ENCODE measurements at regions of chr18 and their contacts with region 1.

Region 1: GRCh38 chr18:7789856-7790552 is 222.9 kb downstream of the PTPRM start:
- DNase-seq: peak; percentile 55
- ATAC-seq: peak; percentile 81
- H3K4me3 ChIP-seq: no peak overlapping the region
- H3K27ac ChIP-seq: no peak overlapping the region
- H3K4me1 ChIP-seq: no peaks in the 10 kb centered on the region
- H3K27me3 ChIP-seq: no peaks in the 10 kb centered on the region
- CTCF ChIP-seq: peak; percentile 61
- POLR2A ChIP-seq: no peak
- RAD21 ChIP-seq: peak; percentile 79

Region 2: GRCh38 chr18:7221424-7222155 is 568.4 kb before region 1 on chr18:
- CTCF ChIA-PET with region 1: no interaction called
- POLR2A ChIA-PET with region 1: no interaction called
- dilution Hi-C with region 1: no loop called
- in situ Hi-C with region 1: no loop called
- intact Hi-C with region 1: loop called (anchors 5 kb)
- DNase-seq: peak; percentile 69
- ATAC-seq: peak; percentile 97
- H3K4me3 ChIP-seq: no peak overlapping the region
- H3K27ac ChIP-seq: no peak overlapping the region
- H3K4me1 ChIP-seq: no peaks in the 10 kb centered on the region
- H3K27me3 ChIP-seq: peaks cover 3% of the 10 kb centered on the region
- CTCF ChIP-seq: peak; percentile 79
- POLR2A ChIP-seq: no peak
- RAD21 ChIP-seq: peak; percentile 90

Region 3: DNA sequence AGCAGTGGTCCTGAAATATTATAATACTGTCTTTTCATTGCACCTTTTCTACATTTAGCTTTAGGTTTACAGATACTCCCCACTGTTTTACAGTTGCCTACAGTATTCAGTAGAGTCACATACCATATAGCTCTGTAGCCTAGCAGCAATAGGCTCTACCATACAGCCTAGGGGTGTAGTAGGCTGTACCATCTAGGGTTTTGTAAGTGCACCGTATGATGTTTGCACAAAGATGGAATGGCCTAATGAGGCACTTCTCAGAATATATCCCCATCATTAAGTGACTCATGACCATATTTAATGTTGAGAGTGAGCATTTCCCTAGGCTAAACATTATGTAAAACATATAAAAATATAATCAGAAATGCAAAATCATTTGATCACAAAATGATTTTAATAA is 307.9 kb after region 1 on chr18:
- CTCF ChIA-PET with region 1: no interaction called
- POLR2A ChIA-PET with region 1: no interaction called
- dilution Hi-C with region 1: no loop called
- in situ Hi-C with region 1: no loop called
- intact Hi-C with region 1: no loop called
- DNase-seq: no peak
- ATAC-seq: no peak
- H3K4me3 ChIP-seq: no peak overlapping the region
- H3K27ac ChIP-seq: no peak overlapping the region
- H3K4me1 ChIP-seq: no peaks in the 10 kb centered on the region
- H3K27me3 ChIP-seq: no peaks in the 10 kb centered on the region
- CTCF ChIP-seq: no peak
- POLR2A ChIP-seq: no peak
- RAD21 ChIP-seq: no peak

Region 4: DNA sequence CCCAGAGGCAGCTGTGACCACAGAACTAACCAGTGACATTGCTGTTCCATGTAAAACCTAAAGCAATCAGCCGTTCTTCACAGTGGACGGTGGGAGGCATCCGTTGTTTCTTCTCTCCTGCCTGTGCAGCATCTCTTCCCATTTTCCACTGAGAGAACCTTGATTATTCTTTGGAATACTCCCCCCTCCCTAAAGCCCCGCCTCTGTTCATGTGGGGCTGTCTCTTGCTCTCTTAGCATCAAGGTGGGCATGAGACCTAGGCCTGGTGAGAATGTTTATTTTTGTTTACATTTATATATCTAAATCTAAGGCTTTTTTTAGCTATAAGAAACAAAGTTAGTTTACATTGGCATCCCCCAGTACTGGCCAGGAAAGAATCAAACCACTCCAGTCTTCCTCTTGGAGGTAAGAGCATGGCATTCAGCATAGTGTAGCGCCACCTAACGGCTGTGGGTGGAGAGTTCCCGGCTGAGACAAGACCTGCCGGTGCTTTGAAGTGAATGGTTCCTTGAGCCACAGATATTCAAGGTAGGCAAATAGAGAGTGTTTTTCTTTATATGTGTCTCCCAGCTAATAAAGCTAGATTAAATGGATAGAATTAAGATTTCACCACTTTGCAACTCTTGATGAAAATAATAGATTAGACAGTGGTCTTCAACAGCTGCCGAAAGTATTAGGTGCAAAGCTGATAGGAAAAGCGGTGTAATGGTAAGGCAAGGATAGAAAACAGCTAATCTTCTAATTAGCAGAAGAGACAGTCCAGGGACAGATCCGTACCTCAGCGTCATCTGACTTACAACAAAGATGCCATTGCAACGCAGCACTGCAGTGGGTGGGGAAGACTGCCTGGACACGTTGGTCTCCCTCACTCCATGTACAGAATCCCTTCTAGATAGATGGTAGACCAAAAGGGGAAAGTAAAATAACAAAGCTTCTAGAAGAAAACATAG is 599.7 kb after region 1 on chr18:
- CTCF ChIA-PET with region 1: interaction called, 3 read pairs
- POLR2A ChIA-PET with region 1: no interaction called
- dilution Hi-C with region 1: no loop called
- in situ Hi-C with region 1: loop called (anchors 25 kb)
- intact Hi-C with region 1: loop called (anchors 5 kb)
- DNase-seq: peak; percentile 78
- ATAC-seq: peak; percentile 60; the same call in 1 of the 2 replicates
- H3K4me3 ChIP-seq: no peak overlapping the region
- H3K27ac ChIP-seq: no peak overlapping the region
- H3K4me1 ChIP-seq: peaks cover 2% of the 10 kb centered on the region; the same call in 1 of the 2 replicates
- H3K27me3 ChIP-seq: no peaks in the 10 kb centered on the region
- CTCF ChIP-seq: peak; percentile 78
- POLR2A ChIP-seq: no peak
- RAD21 ChIP-seq: peak; percentile 87

Region 5: DNA sequence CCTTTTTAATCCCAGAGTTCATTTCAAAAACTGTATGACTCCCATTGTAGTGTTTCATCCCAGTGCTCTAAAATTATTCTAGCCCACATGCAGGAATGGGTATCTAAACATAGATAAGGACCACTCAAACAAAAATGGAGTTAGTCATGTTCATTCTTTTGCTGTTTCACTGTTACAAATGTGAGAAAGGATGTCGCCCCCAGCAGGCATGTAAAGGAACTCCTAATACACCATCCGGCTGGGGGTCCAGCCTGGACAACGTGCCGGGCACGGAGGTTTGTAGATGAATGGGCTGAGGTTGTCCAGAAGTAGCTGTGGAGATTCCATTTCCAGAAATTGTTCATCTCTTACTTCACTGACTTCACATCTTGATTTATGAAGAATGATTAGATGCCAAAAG is 717.4 kb after region 1 on chr18:
- CTCF ChIA-PET with region 1: no interaction called
- POLR2A ChIA-PET with region 1: no interaction called
- dilution Hi-C with region 1: no loop called
- in situ Hi-C with region 1: no loop called
- intact Hi-C with region 1: no loop called
- DNase-seq: peak; percentile 4
- ATAC-seq: peak; percentile 32
- H3K4me3 ChIP-seq: no peak overlapping the region
- H3K27ac ChIP-seq: no peak overlapping the region
- H3K4me1 ChIP-seq: no peaks in the 10 kb centered on the region
- H3K27me3 ChIP-seq: peaks cover 24% of the 10 kb centered on the region
- CTCF ChIP-seq: 0 out of 2 replicates have a peak, but pooled peaks have one; percentile 25
- POLR2A ChIP-seq: no peak
- RAD21 ChIP-seq: no peak

Measured in IMR-90 (cell line).